ENCODE measurements at regions of chr7 and their contacts with region 1.

Region 1: GRCh38 chr7:91880413-91881241 is at the start of gene MTERF1:
- DNase-seq: peak; percentile 95
- ATAC-seq: peak; percentile 96
- H3K4me3 ChIP-seq: peak within 1 kb of the TSS; percentile 82 to 97 (median 85)
- H3K4me3 Mint-ChIP-seq: peak within 1 kb of the TSS; percentile 95
- H3K27ac ChIP-seq: peak within 1 kb of the TSS; percentile 65 to 72
- H3K27ac Mint-ChIP-seq: peak within 1 kb of the TSS; percentile 87
- H3K4me1 ChIP-seq: peaks cover 10 to 12% of the 10 kb centered on the region in 2 donors
- H3K4me1 Mint-ChIP-seq: peaks cover 30% of the 10 kb centered on the region
- H3K27me3 ChIP-seq: no peaks in the 10 kb centered on the region
- H3K27me3 Mint-ChIP-seq: peaks cover 2% of the 10 kb centered on the region
- CTCF ChIP-seq: peak; percentile 88
- total RNA-seq, gene MTERF1: 33.7 and 34.4 TPM in 2 replicates

Region 2: DNA sequence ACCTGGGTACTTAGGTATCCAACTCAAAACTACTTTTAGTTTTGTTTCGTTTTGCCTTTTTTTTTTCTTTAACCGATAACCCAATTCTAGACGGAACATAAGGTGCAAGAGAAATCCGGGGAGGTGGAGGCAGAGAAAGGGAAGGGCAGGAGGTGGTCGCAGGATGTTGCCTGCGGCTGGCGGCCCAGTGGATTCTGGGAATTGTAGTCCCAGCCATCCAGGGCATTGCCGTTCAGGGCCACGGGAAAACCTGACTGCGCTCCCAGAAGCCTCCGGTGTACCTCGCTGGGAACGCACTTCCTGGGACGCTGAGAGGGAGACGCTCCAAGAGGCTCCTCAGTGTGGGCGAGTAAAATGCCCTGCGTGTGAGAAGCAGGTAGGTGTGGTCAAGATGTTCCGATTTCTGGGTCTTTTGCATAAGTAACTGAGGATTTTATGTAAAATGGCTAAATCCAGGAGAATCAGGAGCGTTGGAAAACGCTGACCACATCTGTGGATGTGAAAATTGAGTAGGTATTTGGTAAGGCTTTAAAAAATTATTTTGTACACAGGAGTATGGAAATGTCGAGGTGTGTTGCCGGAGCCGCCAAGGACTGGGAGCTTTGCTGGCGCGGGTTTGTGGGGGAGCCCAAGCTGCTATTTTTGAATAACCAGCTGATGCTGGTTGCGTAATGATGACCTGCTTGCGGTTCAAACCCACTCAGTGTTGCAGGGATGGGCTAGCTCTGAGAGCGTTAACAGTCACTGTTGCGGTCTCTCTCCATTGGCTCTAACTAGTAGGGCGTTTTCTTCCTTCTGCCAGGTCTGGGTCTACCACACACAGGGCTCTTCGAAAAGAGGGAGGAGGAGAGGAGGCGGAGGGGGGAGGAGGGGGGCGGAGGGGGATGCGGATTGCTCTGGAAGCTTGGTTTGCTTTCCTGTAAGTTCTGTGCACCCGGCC is 1477.2 kb before region 1 on chr7 and contains the start of gene CLDN12:
- CTCF ChIA-PET with region 1: no interaction called
- POLR2A ChIA-PET with region 1: no interaction called
- intact Hi-C with region 1: loop called (anchors 5 kb)
- DNase-seq: peak; percentile 90
- ATAC-seq: peak; percentile 96
- H3K4me3 ChIP-seq: peak within 1 kb of the TSS; percentile 65 to 98 (median 81)
- H3K4me3 Mint-ChIP-seq: peak within 1 kb of the TSS; percentile 99
- H3K27ac ChIP-seq: peak within 1 kb of the TSS; percentile 47 to 72
- H3K27ac Mint-ChIP-seq: peak within 1 kb of the TSS; percentile 98
- H3K4me1 ChIP-seq: peaks cover 5% of the 10 kb centered on the region in 2 donors
- H3K4me1 Mint-ChIP-seq: peaks cover 20% of the 10 kb centered on the region
- H3K27me3 ChIP-seq: no peaks in the 10 kb centered on the region
- H3K27me3 Mint-ChIP-seq: no peaks in the 10 kb centered on the region
- CTCF ChIP-seq: no peak
- total RNA-seq, gene CLDN12: 14.1 and 17.3 TPM in 2 replicates

Region 3: GRCh38 chr7:91089382-91089963 is 791.2 kb before region 1 on chr7:
- CTCF ChIA-PET with region 1: interaction called, 7 read pairs
- POLR2A ChIA-PET with region 1: no interaction called
- intact Hi-C with region 1: loop called (anchors 2 kb)
- DNase-seq: peak; percentile 57
- ATAC-seq: peak; percentile 58
- H3K4me3 ChIP-seq: no peak overlapping the region
- H3K4me3 Mint-ChIP-seq: peak overlapping the region; percentile 21
- H3K27ac ChIP-seq: no peak overlapping the region
- H3K27ac Mint-ChIP-seq: no peak overlapping the region
- H3K4me1 ChIP-seq: peaks cover 0 to 4% of the 10 kb centered on the region in 2 donors
- H3K4me1 Mint-ChIP-seq: peaks cover 7% of the 10 kb centered on the region
- H3K27me3 ChIP-seq: no peaks in the 10 kb centered on the region
- H3K27me3 Mint-ChIP-seq: no peaks in the 10 kb centered on the region
- CTCF ChIP-seq: peak; percentile 95

Region 4: DNA sequence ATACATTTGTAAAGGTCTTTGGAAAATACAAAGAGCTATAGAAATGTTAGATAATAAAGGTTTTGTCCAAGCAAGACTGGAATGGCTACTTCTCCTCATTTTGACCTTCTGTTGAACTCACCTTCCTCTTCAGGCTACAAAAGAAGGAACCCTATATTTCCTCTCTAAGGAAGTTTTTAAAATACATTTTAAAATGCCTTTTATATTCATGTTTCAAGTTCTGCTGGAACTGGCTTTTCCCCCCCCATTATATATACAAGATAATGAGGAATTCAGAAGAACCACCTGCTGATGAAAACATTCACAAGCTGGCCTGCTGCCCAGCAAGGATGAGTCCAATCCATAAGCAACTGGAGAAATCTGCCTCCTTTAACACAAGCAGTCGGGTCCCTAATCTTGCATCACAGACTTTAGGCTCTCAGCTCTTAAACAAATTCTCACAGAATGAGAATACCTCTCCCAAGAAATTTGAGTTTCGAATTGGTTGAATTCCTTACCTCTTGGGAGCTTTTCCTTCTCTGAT is 44.7 kb before region 1 on chr7:
- CTCF ChIA-PET with region 1: interaction called, 14 read pairs
- POLR2A ChIA-PET with region 1: no interaction called
- intact Hi-C with region 1: no loop called
- DNase-seq: no peak
- ATAC-seq: no peak
- H3K4me3 ChIP-seq: no peak overlapping the region
- H3K4me3 Mint-ChIP-seq: no peak overlapping the region
- H3K27ac ChIP-seq: no peak overlapping the region
- H3K27ac Mint-ChIP-seq: no peak overlapping the region
- H3K4me1 ChIP-seq: no peaks in the 10 kb centered on the region
- H3K4me1 Mint-ChIP-seq: no peaks in the 10 kb centered on the region
- H3K27me3 ChIP-seq: no peaks in the 10 kb centered on the region
- H3K27me3 Mint-ChIP-seq: no peaks in the 10 kb centered on the region
- CTCF ChIP-seq: no peak

Region 5: GRCh38 chr7:92134271-92135051 is 253.8 kb after region 1 on chr7 and contains the start of gene CYP51A1:
- CTCF ChIA-PET with region 1: no interaction called
- POLR2A ChIA-PET with region 1: interaction called, 3 read pairs
- intact Hi-C with region 1: loop called (anchors 1 kb)
- DNase-seq: peak; percentile 99
- ATAC-seq: peak; percentile 84
- H3K4me3 ChIP-seq: peak within 1 kb of the TSS; percentile 86 to 94 (median 90)
- H3K4me3 Mint-ChIP-seq: peak within 1 kb of the TSS; percentile 99
- H3K27ac ChIP-seq: peak within 1 kb of the TSS; percentile 94 to 98
- H3K27ac Mint-ChIP-seq: peak within 1 kb of the TSS; percentile 100
- H3K4me1 ChIP-seq: peaks cover 18 to 27% of the 10 kb centered on the region in 2 donors
- H3K4me1 Mint-ChIP-seq: peaks cover 39% of the 10 kb centered on the region
- H3K27me3 ChIP-seq: no peaks in the 10 kb centered on the region
- H3K27me3 Mint-ChIP-seq: no peaks in the 10 kb centered on the region
- CTCF ChIP-seq: no peak
- total RNA-seq, gene CYP51A1: 36.1 and 37.9 TPM in 2 replicates

Region 6: GRCh38 chr7:92528188-92528957 is 647.7 kb after region 1 on chr7 and contains the starts of genes PEX1 and RBM48:
- CTCF ChIA-PET with region 1: interaction called, 5 read pairs
- POLR2A ChIA-PET with region 1: no interaction called
- intact Hi-C with region 1: loop called (anchors 1 kb)
- DNase-seq: peak; percentile 98
- ATAC-seq: peak; percentile 91
- H3K4me3 ChIP-seq: peak within 1 kb of the TSS; percentile 81 to 99 (median 95)
- H3K4me3 Mint-ChIP-seq: peak within 1 kb of the TSS; percentile 88
- H3K27ac ChIP-seq: peak within 1 kb of the TSS; percentile 89 to 96
- H3K27ac Mint-ChIP-seq: peak within 1 kb of the TSS; percentile 95
- H3K4me1 ChIP-seq: peaks cover 14 to 19% of the 10 kb centered on the region in 2 donors
- H3K4me1 Mint-ChIP-seq: peaks cover 26% of the 10 kb centered on the region
- H3K27me3 ChIP-seq: no peaks in the 10 kb centered on the region
- H3K27me3 Mint-ChIP-seq: no peaks in the 10 kb centered on the region
- CTCF ChIP-seq: peak; percentile 31
- total RNA-seq, gene PEX1: 33.7 and 34.8 TPM in 2 replicates
- total RNA-seq, gene RBM48: 32.9 and 36.8 TPM in 2 replicates

Measured in B cell (primary cell).